ENCODE measurements at regions of chr18 and their contacts with region 1.

Region 1: DNA sequence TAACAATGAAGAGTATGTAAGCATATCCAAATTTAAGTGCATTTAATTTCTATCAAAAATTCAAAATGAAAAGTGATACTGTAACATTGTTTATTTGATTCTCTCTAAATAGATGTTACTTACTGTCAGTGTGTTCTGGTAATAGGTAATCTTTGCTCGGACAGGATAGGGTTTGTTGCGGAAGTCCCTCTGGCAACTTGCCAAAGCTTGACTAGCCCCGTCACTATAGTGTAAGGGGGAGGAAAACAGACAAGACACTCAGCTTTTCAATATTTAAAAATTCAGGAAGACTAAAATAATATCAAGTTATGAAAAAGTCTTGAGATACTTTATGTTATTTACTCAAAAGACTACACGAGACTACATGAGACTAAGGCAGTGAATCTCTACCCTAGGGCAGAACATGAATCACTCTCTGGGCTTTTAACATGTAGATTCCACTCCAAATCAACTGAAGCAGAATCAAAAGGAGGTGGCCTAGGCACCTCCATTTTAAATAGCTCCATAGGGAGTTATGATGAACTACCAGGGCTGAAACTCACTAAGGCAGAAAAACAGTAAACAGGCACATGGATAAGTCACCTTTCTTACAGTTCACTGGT is 5.9 kb downstream of the LMAN1 start:
- DNase-seq: no peak
- ATAC-seq: no peak
- H3K4me3 ChIP-seq: no peak overlapping the region
- H3K27ac ChIP-seq: no peak overlapping the region
- H3K4me1 ChIP-seq: no peaks in the 10 kb centered on the region; the same call in 1 of the 2 replicates
- H3K27me3 ChIP-seq: no peaks in the 10 kb centered on the region
- CTCF ChIP-seq: no peak
- POLR2A ChIP-seq: no peak
- RAD21 ChIP-seq: no peak

Region 2: DNA sequence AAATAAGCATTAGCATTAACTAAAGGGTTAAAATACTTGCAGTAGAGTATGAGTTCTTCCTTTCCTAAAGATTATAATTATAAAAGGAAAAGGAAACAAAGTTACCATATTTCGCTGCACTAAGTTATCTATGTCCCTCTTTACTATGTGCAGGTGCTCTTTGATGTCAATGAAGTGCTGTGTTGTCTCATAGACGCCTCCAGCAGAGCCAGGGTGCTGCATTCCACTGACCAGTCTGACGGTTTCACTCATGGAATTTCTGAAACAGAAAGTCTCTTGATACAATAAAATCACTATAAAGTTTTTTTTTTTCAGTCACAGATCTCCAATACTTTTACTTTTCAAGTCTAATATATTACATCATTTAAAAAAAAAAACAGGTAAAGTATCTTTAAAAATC is 20.2 kb before region 1 on chr18:
- CTCF ChIA-PET with region 1: interaction called, 4 read pairs
- POLR2A ChIA-PET with region 1: no interaction called
- dilution Hi-C with region 1: no loop called
- in situ Hi-C with region 1: no loop called
- intact Hi-C with region 1: loop called (anchors 2 kb)
- DNase-seq: no peak
- ATAC-seq: no peak
- H3K4me3 ChIP-seq: no peak overlapping the region
- H3K27ac ChIP-seq: no peak overlapping the region
- H3K4me1 ChIP-seq: no peaks in the 10 kb centered on the region
- H3K27me3 ChIP-seq: no peaks in the 10 kb centered on the region
- CTCF ChIP-seq: no peak
- POLR2A ChIP-seq: no peak
- RAD21 ChIP-seq: no peak